ENCODE measurements at regions of chr2 and their contacts with region 1.

Region 1: GRCh38 chr2:168920504-168921157 is 19.5 kb downstream of the G6PC2 start:
- DNase-seq: no peak
- H3K4me3 Mint-ChIP-seq: no peak overlapping the region
- H3K27ac Mint-ChIP-seq: no peak overlapping the region
- H3K4me1 Mint-ChIP-seq: peaks cover 4% of the 10 kb centered on the region
- H3K27me3 Mint-ChIP-seq: peaks cover 8% of the 10 kb centered on the region

Region 2: DNA sequence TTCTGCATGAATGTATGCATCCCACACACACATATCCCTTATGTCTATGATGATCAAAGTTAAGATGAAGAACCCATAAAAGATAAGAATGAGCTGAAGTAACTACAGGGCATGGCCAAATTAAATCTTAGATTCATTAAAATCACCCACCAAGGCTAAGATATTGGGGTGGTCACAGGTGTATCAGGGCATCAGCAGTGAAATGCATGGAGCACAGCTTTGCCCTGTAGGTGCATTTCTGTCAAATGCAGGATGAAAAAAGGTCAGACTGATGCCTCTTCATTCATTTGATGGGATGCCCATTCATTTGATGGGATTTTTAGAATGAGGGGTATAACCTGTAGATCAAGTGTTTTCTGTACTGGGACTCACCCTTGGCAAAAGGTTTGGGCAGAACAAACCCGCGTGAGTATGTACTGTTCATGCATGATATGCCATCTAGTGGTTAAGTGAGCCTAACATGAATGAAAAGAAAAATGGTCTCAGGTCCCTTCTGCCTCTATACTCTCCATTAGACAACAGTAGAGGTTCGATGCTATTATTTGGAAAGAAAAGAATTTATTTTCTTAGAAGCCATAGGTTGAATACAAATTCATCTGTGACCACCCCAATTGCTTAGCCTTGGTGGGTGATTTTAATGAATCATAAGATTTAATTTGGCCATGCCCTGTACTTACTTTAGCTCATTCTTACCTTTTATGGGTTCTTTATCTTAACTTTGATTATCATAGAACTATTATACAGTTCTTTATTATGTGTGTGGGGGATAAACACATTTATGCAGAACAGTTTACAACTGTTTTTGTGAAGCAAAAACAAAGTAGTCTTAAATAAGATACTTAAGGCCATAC is 161.4 kb before region 1 on chr2:
- CTCF ChIA-PET with region 1: no interaction called
- intact Hi-C with region 1: loop called (anchors 5 kb)
- DNase-seq: peak; percentile 41
- H3K4me3 Mint-ChIP-seq: no peak overlapping the region
- H3K27ac Mint-ChIP-seq: no peak overlapping the region
- H3K4me1 Mint-ChIP-seq: peaks cover 30% of the 10 kb centered on the region
- H3K27me3 Mint-ChIP-seq: no peaks in the 10 kb centered on the region

Region 3: GRCh38 chr2:168773719-168774521 is 146.7 kb before region 1 on chr2:
- CTCF ChIA-PET with region 1: interaction called, 4 read pairs
- intact Hi-C with region 1: loop called (anchors 1 kb)
- DNase-seq: peak; percentile 21
- H3K4me3 Mint-ChIP-seq: no peak overlapping the region
- H3K27ac Mint-ChIP-seq: no peak overlapping the region
- H3K4me1 Mint-ChIP-seq: no peaks in the 10 kb centered on the region
- H3K27me3 Mint-ChIP-seq: no peaks in the 10 kb centered on the region